Mammary epithelial cell (primary cell): ENCODE measurements at regions of chr4 and their contacts with region 1.

Region 1: GRCh38 chr4:58776627-58777026 is 1666.4 kb upstream of the IGFBP7 start:
- DNase-seq: no peak
- H3K4me3 ChIP-seq: no peak overlapping the region
- H3K27ac ChIP-seq: no peak overlapping the region
- H3K4me1 ChIP-seq: no peaks in the 10 kb centered on the region
- H3K27me3 ChIP-seq: no peaks in the 10 kb centered on the region
- CTCF ChIP-seq: no peak

Region 2: GRCh38 chr4:58740897-58741296 is 35.7 kb before region 1 on chr4:
- CTCF ChIA-PET with region 1: no interaction called
- dilution Hi-C with region 1: no loop called
- in situ Hi-C with region 1: no loop called
- intact Hi-C with region 1: loop called (anchors 2 kb)
- DNase-seq: no peak
- H3K4me3 ChIP-seq: no peak overlapping the region
- H3K27ac ChIP-seq: no peak overlapping the region
- H3K4me1 ChIP-seq: no peaks in the 10 kb centered on the region
- H3K27me3 ChIP-seq: no peaks in the 10 kb centered on the region
- CTCF ChIP-seq: no peak

Region 3: DNA sequence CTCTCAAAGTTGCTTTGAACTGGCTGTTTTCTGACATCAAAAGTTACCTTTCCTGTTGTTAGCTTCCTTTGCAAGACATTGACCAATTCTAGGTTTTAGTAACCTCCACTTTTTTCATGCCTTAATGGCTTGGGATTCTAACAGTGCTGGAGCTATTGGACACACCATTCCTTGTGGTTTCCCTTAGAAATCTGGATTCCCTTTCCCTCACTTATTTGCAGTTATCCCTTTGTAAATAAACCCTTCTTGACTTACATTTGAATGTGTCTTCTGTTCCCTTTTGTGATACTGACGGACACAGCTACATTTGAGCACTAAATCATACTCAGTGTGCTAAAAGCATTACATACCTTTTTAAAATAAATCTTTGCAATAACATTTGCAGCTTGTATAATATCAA is 261.2 kb after region 1 on chr4:
- CTCF ChIA-PET with region 1: no interaction called
- dilution Hi-C with region 1: no loop called
- in situ Hi-C with region 1: no loop called
- intact Hi-C with region 1: no loop called
- DNase-seq: no peak
- H3K4me3 ChIP-seq: no peak overlapping the region
- H3K27ac ChIP-seq: no peak overlapping the region
- H3K4me1 ChIP-seq: no peaks in the 10 kb centered on the region
- H3K27me3 ChIP-seq: no peaks in the 10 kb centered on the region
- CTCF ChIP-seq: no peak

Region 4: GRCh38 chr4:59503731-59504130 is 727.1 kb after region 1 on chr4:
- CTCF ChIA-PET with region 1: no interaction called
- dilution Hi-C with region 1: no loop called
- in situ Hi-C with region 1: no loop called
- intact Hi-C with region 1: no loop called
- DNase-seq: no peak
- H3K4me3 ChIP-seq: no peak overlapping the region
- H3K27ac ChIP-seq: no peak overlapping the region
- H3K4me1 ChIP-seq: no peaks in the 10 kb centered on the region
- H3K27me3 ChIP-seq: no peaks in the 10 kb centered on the region
- CTCF ChIP-seq: no peak